ENCODE measurements at regions of chr11 and their contacts with region 1.

Region 1: DNA sequence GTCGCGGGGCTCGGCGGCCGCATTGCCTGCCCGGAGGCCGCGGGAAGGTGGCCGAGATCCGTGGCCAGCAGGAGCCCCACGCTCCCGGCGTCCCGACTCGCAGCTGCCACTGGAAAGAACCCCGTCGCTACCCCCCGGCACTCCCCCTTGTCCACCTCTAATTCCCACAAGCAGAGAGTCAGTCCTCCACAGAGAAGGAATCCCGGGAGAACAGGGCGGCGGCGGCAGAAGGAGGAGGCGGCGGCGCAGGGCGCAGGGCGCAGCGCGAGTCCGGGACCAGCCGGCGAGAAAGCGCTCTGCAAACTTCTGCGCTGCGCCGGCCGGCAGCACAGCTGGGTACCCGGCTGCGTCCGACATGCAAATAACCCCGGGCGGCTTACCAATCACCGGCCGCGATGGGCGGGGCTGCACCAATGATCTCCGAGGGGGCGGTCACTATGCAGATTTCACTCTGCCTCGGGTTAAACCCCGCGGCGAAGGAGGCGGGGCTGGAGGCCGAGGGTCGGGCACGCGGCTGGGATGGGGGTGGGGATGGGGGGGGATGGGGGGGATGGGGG is at the start of gene ABTB2:
- DNase-seq: peak; percentile 97 to 98
- ATAC-seq: peak; percentile 92 to 98 (median 94)
- H3K4me3 ChIP-seq: peak within 1 kb of the TSS; percentile 47
- H3K4me3 Mint-ChIP-seq: peak within 1 kb of the TSS; percentile 96
- H3K27ac ChIP-seq: no peak within 1 kb of the TSS
- H3K27ac Mint-ChIP-seq: peak within 1 kb of the TSS; percentile 61 to 66
- H3K4me1 ChIP-seq: peaks cover 28% of the 10 kb centered on the region
- H3K4me1 Mint-ChIP-seq: peaks cover 28 to 43% of the 10 kb centered on the region in 2 donors
- H3K27me3 ChIP-seq: peaks cover 22% of the 10 kb centered on the region
- H3K27me3 Mint-ChIP-seq: peaks cover 32 to 62% of the 10 kb centered on the region in 2 donors
- CTCF ChIP-seq: no peak
- total RNA-seq, gene ABTB2: 0.65 to 1.7 (median 1.1) TPM

Region 2: GRCh38 chr11:33857933-33858371 is 499.8 kb before region 1 on chr11:
- intact Hi-C with region 1: loop called (anchors 1 kb)
- DNase-seq: peak; percentile 65 to 84
- ATAC-seq: peak; percentile 86 to 96 (median 87)
- H3K4me3 ChIP-seq: no peak overlapping the region
- H3K4me3 Mint-ChIP-seq: no peak overlapping the region
- H3K27ac ChIP-seq: no peak overlapping the region
- H3K27ac Mint-ChIP-seq: no peak overlapping the region
- H3K4me1 ChIP-seq: no peaks in the 10 kb centered on the region
- H3K4me1 Mint-ChIP-seq: peaks cover 5 to 6% of the 10 kb centered on the region in 2 donors
- H3K27me3 ChIP-seq: peaks cover 2% of the 10 kb centered on the region
- H3K27me3 Mint-ChIP-seq: peaks cover 50 to 76% of the 10 kb centered on the region in 2 donors
- CTCF ChIP-seq: peak; percentile 87

Region 3: DNA sequence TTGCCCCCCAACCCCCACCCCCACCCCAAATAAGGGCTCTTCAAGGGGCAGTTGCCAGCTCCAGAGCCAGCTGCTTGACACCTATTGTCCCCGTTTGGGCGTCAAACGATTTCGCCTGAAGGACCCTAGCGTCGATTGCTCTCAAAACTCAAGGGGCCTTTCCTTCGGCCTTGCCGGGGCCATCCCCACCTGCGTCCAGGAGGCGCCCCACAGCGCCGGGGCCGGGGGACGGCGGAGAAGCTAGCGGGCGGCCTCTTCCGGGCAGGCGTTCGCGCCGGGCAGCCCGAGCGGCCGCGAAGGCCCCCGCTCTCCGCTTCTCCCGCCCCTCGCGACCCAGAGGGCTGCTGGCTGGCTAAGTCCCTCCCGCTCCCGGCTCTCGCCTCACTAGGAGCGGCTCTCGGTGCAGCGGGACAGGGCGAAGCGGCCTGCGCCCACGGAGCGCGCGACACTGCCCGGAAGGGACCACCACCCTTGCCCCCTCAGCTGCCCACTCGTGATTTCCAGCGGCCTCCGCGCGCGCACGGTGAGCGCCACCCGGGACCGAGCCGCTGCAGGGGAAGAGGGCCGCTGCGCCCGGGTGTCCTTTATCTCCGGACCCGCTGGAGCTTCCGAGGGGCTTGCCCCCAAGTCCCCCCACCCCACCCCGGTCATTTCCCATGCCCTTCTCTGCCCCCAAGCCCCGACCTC is 306.3 kb before region 1 on chr11 and contains the start of gene CAPRIN1:
- intact Hi-C with region 1: loop called (anchors 5 kb)
- DNase-seq: peak; percentile 84 to 92
- ATAC-seq: peak; percentile 73 to 88 (median 79)
- H3K4me3 ChIP-seq: peak within 1 kb of the TSS; percentile 62
- H3K4me3 Mint-ChIP-seq: peak within 1 kb of the TSS; percentile 99
- H3K27ac ChIP-seq: peak within 1 kb of the TSS; percentile 100
- H3K27ac Mint-ChIP-seq: peak within 1 kb of the TSS; percentile 95 to 96
- H3K4me1 ChIP-seq: peaks cover 15% of the 10 kb centered on the region
- H3K4me1 Mint-ChIP-seq: peaks cover 27 to 28% of the 10 kb centered on the region in 2 donors
- H3K27me3 ChIP-seq: no peaks in the 10 kb centered on the region
- H3K27me3 Mint-ChIP-seq: no peaks in the 10 kb centered on the region
- CTCF ChIP-seq: no peak
- total RNA-seq, gene CAPRIN1: 118 to 158 (median 137) TPM

Region 4: DNA sequence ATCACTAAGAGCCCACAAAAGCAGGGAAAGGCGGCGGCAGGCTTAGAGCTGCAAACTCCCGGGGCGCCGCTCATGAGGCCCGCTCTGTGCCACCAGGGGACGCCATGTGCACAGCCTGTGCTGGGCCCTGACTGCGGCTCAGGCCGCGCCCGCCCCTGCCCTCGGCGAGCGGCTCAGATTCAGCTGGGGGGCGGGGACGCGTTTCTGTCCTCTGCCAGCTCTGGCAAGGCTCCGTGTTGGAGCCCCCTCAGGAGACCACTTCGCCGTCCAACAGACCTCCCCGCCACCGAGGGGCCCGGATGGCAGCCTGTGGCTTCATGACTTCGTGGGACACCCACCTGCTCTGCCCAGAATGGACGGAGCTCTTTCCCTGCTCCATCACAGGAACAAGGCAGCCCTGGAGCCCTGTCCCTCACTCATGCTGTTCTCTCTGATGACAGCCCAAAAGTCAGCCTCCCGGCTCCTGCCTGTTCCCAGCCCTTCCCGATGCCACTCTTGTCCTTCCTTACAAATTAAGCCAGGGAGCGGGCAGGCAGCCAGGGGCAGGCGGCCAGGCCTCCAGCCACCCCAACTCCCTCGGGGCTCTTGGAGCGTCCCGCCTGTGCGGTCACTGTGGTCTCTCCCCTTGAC is 183.3 kb before region 1 on chr11:
- intact Hi-C with region 1: loop called (anchors 1 kb)
- DNase-seq: peak; percentile 77 to 88
- ATAC-seq: peak; percentile 94 to 100 (median 99)
- H3K4me3 ChIP-seq: no peak overlapping the region
- H3K4me3 Mint-ChIP-seq: peak overlapping the region; percentile 73
- H3K27ac ChIP-seq: no peak overlapping the region
- H3K27ac Mint-ChIP-seq: peak overlapping the region in 1 of 2 donors; percentile 13
- H3K4me1 ChIP-seq: peaks cover 11% of the 10 kb centered on the region
- H3K4me1 Mint-ChIP-seq: peaks cover 5 to 14% of the 10 kb centered on the region in 2 donors
- H3K27me3 ChIP-seq: peaks cover 2% of the 10 kb centered on the region
- H3K27me3 Mint-ChIP-seq: no peaks in the 10 kb centered on the region
- CTCF ChIP-seq: peak; percentile 85